ENCODE measurements at regions of chr7 and their contacts with region 1.

Region 1: DNA sequence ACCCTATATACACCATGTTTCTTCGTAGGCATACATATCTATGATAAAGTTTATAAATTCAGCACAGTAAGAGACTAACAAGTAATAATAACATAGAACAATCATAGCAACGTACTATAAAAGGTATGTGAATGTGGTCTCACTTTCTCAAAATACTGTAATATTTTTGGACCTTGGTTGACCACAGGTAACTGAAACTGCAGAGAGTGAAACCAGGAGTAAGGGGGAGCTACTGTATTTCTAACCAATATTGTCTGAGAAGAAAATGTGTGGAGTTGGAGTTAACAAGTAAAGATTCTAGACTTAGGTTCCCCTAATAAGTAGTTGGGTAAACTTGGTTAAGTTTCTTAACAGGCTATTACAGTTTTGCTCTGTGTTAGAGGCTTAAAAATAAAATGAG is 72.1 kb downstream of the GNAI1 start:
- DNase-seq: no peak
- H3K4me3 ChIP-seq: no peak overlapping the region
- H3K27ac ChIP-seq: no peak overlapping the region
- H3K4me1 ChIP-seq: peaks cover 0 to 44% (median 19%) of the 10 kb centered on the region in 4 donors
- H3K27me3 ChIP-seq: no peaks in the 10 kb centered on the region
- CTCF ChIP-seq: no peak
- EP300 ChIP-seq: no peak
- POLR2A ChIP-seq: no peak

Region 2: DNA sequence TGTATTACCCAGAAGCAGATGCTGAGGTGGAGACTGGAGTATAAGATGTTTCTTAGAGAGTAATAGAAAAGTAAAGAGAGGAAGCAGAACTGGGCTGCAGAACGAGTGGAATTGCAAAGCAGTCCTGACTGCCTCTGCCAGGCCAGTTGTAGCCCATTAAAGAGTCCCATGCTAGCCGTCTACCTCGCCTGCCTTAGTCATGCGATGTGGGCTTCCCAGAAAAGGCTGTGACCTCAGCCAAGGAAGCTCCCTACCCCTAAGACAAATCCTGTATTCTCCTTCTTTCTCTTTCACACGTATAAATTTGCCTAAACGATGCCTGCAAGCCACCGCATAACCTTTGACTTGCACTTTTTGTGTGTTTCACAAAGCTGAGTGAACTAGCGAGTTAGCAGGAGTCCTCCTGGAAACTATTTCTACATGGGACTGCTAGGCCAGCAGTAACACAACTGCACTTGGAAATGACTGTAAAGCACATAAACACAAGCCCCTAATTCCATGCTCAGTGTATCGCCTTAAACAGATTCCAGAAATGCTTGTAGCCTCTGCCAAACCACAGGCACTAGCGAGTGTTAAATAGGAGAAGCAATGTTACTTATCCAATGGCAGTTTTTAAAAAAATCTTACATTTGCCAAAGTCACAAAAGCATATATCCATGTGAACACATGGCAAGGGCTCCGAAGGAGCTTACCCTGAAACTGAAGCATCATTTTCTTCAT is 119.6 kb before region 1 on chr7:
- intact Hi-C with region 1: no loop called
- DNase-seq: no peak
- H3K4me3 ChIP-seq: no peak overlapping the region
- H3K27ac ChIP-seq: peak overlapping the region in 2 of 4 donors; percentile 54 to 57
- H3K4me1 ChIP-seq: peaks cover 0 to 26% (median 14%) of the 10 kb centered on the region in 4 donors
- H3K27me3 ChIP-seq: no peaks in the 10 kb centered on the region
- CTCF ChIP-seq: no peak
- EP300 ChIP-seq: no peak
- POLR2A ChIP-seq: no peak

Region 3: GRCh38 chr7:80140388-80140787 is 66.4 kb before region 1 on chr7:
- intact Hi-C with region 1: loop called (anchors 5 kb)
- DNase-seq: no peak
- H3K4me3 ChIP-seq: no peak overlapping the region
- H3K27ac ChIP-seq: peak overlapping the region in 1 of 4 donors; percentile 21
- H3K4me1 ChIP-seq: peaks cover 0 to 81% (median 50%) of the 10 kb centered on the region in 4 donors
- H3K27me3 ChIP-seq: no peaks in the 10 kb centered on the region
- CTCF ChIP-seq: no peak
- EP300 ChIP-seq: no peak
- POLR2A ChIP-seq: no peak

Region 4: GRCh38 chr7:80257756-80258155 is 51.0 kb after region 1 on chr7:
- intact Hi-C with region 1: no loop called
- DNase-seq: no peak
- H3K4me3 ChIP-seq: no peak overlapping the region
- H3K27ac ChIP-seq: no peak overlapping the region
- H3K4me1 ChIP-seq: peaks cover 0 to 20% (median under 1%) of the 10 kb centered on the region in 4 donors
- H3K27me3 ChIP-seq: no peaks in the 10 kb centered on the region
- CTCF ChIP-seq: no peak
- EP300 ChIP-seq: no peak
- POLR2A ChIP-seq: no peak

Region 5: GRCh38 chr7:80277434-80278427 is 71.0 kb after region 1 on chr7:
- intact Hi-C with region 1: no loop called
- DNase-seq: no peak
- H3K4me3 ChIP-seq: no peak overlapping the region
- H3K27ac ChIP-seq: peak overlapping the region; percentile 20 to 67 (median 52)
- H3K4me1 ChIP-seq: peaks cover 0 to 38% (median 30%) of the 10 kb centered on the region in 4 donors
- H3K27me3 ChIP-seq: no peaks in the 10 kb centered on the region
- CTCF ChIP-seq: no peak
- EP300 ChIP-seq: no peak
- POLR2A ChIP-seq: no peak

Measured in sigmoid colon (tissue), 7 donors.